ENCODE measurements at regions of chr2 and their contacts with region 1.

Region 1: DNA sequence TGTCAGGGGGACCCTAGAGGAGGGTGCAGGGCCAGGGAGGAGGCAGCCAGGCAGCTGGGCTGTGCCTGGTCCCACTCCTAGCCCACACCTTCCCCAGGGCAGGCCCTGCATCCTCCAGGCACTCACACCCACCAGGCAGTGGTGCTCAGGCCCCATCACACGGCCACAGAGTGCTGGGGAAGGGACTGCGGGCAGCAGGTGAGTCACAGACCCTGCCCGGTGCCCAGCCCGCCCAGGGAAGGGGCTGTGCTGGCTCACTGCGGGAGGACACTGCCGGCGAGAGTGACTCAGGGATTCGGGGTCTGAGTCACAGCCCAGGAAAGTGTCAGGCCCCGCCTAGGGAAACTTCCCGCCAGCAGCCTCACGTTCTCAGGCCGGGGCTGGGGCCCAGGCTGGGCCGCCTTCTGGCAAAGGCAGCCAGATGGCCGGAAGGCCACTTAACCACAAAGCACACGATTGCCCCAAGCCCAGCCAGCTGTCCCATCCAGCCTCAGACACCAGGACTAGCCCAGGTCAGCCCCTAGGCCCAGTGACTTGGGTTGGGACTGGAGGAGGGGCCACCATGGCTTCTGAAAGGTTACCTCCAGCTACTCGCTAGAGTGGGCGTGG is 42.2 kb downstream of the BIN1 start:
- DNase-seq: peak; percentile 60 to 73
- H3K4me3 ChIP-seq: no peak overlapping the region
- H3K4me3 Mint-ChIP-seq: no peak overlapping the region
- H3K27ac Mint-ChIP-seq: peak overlapping the region; percentile 19
- H3K4me1 ChIP-seq: peaks cover 24% of the 10 kb centered on the region
- H3K4me1 Mint-ChIP-seq: peaks cover 6% of the 10 kb centered on the region
- H3K27me3 ChIP-seq: no peaks in the 10 kb centered on the region
- H3K27me3 Mint-ChIP-seq: no peaks in the 10 kb centered on the region
- CTCF ChIP-seq: no peak

Region 2: GRCh38 chr2:126971481-126972278 is 93.1 kb before region 1 on chr2:
- CTCF ChIA-PET with region 1: no interaction called
- POLR2A ChIA-PET with region 1: no interaction called
- intact Hi-C with region 1: no loop called
- DNase-seq: peak; percentile 72 to 81
- H3K4me3 ChIP-seq: no peak overlapping the region
- H3K4me3 Mint-ChIP-seq: peak overlapping the region; percentile 33
- H3K27ac Mint-ChIP-seq: no peak overlapping the region
- H3K4me1 ChIP-seq: peaks cover 3% of the 10 kb centered on the region; the same call in 1 of the 2 replicates
- H3K4me1 Mint-ChIP-seq: peaks cover 11% of the 10 kb centered on the region
- H3K27me3 ChIP-seq: no peaks in the 10 kb centered on the region
- H3K27me3 Mint-ChIP-seq: peaks cover 7% of the 10 kb centered on the region
- CTCF ChIP-seq: peak; percentile 84 to 96

Region 3: GRCh38 chr2:127034883-127035611 is 29.7 kb before region 1 on chr2:
- CTCF ChIA-PET with region 1: no interaction called
- POLR2A ChIA-PET with region 1: no interaction called
- intact Hi-C with region 1: no loop called
- DNase-seq: peak in 1 of 2 experiments; percentile 57
- H3K4me3 ChIP-seq: no peak overlapping the region
- H3K4me3 Mint-ChIP-seq: no peak overlapping the region
- H3K27ac Mint-ChIP-seq: no peak overlapping the region
- H3K4me1 ChIP-seq: peaks cover 9% of the 10 kb centered on the region
- H3K4me1 Mint-ChIP-seq: no peaks in the 10 kb centered on the region
- H3K27me3 ChIP-seq: no peaks in the 10 kb centered on the region
- H3K27me3 Mint-ChIP-seq: no peaks in the 10 kb centered on the region
- CTCF ChIP-seq: peak in 1 of 2 experiments; percentile 2

Region 4: DNA sequence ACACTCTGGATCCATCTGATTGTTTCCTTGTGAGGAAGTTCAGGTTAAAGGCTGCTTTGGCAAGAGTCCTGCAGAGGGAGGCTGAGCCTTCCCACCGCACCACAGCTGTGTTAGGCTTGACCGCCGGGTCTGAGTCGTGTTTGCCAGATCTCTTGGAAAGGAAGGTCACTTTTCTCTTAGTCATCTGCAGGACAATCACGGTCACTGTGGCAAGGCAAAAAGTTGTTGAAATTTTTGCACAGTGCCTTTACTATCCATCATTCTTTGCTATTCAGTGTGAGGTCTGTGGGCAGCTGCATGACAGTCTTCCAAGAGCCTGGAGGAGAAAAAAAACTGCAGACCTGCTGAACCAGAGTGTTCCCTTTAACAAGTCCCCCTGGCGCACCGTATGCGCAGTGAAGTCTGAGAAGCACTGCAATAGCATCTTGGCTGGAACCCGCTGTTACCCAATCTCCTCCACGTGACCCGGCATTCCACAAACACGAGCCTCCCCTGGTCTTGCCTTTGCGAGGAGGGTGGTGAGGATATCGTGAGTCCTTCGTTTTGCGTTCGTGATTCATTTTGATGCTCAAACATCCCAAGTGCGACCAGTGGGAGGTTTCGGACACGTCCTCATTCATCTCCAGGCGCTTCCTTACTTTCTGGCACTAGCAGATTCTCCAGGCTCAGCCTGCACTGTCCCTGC is 19.2 kb after region 1 on chr2:
- CTCF ChIA-PET with region 1: interaction called, 9 read pairs
- POLR2A ChIA-PET with region 1: no interaction called
- intact Hi-C with region 1: loop called (anchors 2 kb)
- DNase-seq: no peak
- H3K4me3 ChIP-seq: no peak overlapping the region
- H3K4me3 Mint-ChIP-seq: no peak overlapping the region
- H3K27ac Mint-ChIP-seq: peak overlapping the region; percentile 93
- H3K4me1 ChIP-seq: peaks cover 83% of the 10 kb centered on the region
- H3K4me1 Mint-ChIP-seq: peaks cover 43% of the 10 kb centered on the region
- H3K27me3 ChIP-seq: no peaks in the 10 kb centered on the region
- H3K27me3 Mint-ChIP-seq: no peaks in the 10 kb centered on the region
- CTCF ChIP-seq: no peak

Region 5: GRCh38 chr2:127100251-127101047 is 35.7 kb after region 1 on chr2:
- CTCF ChIA-PET with region 1: interaction called, 9 read pairs
- POLR2A ChIA-PET with region 1: no interaction called
- intact Hi-C with region 1: loop called (anchors 1 kb)
- DNase-seq: peak; percentile 89 to 91
- H3K4me3 ChIP-seq: no peak overlapping the region
- H3K4me3 Mint-ChIP-seq: peak overlapping the region; percentile 68
- H3K27ac Mint-ChIP-seq: peak overlapping the region; percentile 94
- H3K4me1 ChIP-seq: peaks cover 85% of the 10 kb centered on the region
- H3K4me1 Mint-ChIP-seq: peaks cover 67% of the 10 kb centered on the region
- H3K27me3 ChIP-seq: no peaks in the 10 kb centered on the region
- H3K27me3 Mint-ChIP-seq: no peaks in the 10 kb centered on the region
- CTCF ChIP-seq: peak in 1 of 2 experiments; percentile 7

Region 6: DNA sequence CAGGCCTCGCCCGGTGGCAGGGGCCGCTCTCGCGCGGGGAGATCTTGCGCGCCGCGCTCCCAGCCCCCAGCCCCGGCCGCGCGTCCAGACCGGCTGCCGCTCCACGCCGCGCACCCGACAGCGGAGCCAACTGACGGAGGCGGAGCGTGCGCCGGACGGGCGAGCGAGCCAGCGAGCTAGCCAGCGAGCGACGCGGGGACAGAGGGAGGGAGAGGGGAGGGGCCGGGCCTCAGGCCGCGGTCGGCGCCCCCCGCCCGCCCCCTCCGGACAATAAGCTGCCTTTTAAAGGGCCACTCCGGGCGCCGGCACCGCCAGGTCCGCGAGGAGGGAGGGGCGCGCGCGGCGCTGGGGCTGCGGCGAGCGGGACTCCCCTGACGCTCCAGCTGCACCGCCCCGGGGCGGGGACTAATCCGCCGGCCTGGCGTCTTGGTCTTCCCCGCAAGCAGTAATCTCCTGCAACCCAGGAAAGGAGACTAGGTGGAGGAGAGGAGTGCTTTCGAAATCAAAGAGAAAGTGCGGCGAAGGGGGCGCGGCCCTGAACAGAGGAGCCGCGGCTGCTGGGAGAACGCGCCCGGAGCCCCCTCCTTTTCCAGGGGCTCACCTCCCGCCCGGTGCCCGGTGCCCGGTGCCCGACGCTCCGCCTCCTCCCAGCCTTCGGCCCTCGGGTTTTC is 42.3 kb after region 1 on chr2 and contains the start of gene BIN1:
- CTCF ChIA-PET with region 1: interaction called, 11 read pairs
- POLR2A ChIA-PET with region 1: no interaction called
- intact Hi-C with region 1: loop called (anchors 1 kb)
- DNase-seq: peak; percentile 97 to 98
- H3K4me3 ChIP-seq: peak within 1 kb of the TSS; percentile 98
- H3K4me3 Mint-ChIP-seq: peak within 1 kb of the TSS; percentile 85
- H3K27ac Mint-ChIP-seq: peak within 1 kb of the TSS; percentile 84
- H3K4me1 ChIP-seq: peaks cover 47% of the 10 kb centered on the region
- H3K4me1 Mint-ChIP-seq: peaks cover 39% of the 10 kb centered on the region
- H3K27me3 ChIP-seq: no peaks in the 10 kb centered on the region
- H3K27me3 Mint-ChIP-seq: no peaks in the 10 kb centered on the region
- CTCF ChIP-seq: no peak
- total RNA-seq, gene BIN1: 198 and 205 TPM in 2 replicates

Region 7: GRCh38 chr2:127143841-127144782 is 79.4 kb after region 1 on chr2:
- CTCF ChIA-PET with region 1: interaction called, 6 read pairs
- POLR2A ChIA-PET with region 1: no interaction called
- intact Hi-C with region 1: loop called (anchors 1 kb)
- DNase-seq: no peak
- H3K4me3 ChIP-seq: no peak overlapping the region
- H3K4me3 Mint-ChIP-seq: no peak overlapping the region
- H3K27ac Mint-ChIP-seq: no peak overlapping the region
- H3K4me1 ChIP-seq: no peaks in the 10 kb centered on the region
- H3K4me1 Mint-ChIP-seq: peaks cover 16% of the 10 kb centered on the region
- H3K27me3 ChIP-seq: no peaks in the 10 kb centered on the region
- H3K27me3 Mint-ChIP-seq: no peaks in the 10 kb centered on the region
- CTCF ChIP-seq: no peak

Region 8: DNA sequence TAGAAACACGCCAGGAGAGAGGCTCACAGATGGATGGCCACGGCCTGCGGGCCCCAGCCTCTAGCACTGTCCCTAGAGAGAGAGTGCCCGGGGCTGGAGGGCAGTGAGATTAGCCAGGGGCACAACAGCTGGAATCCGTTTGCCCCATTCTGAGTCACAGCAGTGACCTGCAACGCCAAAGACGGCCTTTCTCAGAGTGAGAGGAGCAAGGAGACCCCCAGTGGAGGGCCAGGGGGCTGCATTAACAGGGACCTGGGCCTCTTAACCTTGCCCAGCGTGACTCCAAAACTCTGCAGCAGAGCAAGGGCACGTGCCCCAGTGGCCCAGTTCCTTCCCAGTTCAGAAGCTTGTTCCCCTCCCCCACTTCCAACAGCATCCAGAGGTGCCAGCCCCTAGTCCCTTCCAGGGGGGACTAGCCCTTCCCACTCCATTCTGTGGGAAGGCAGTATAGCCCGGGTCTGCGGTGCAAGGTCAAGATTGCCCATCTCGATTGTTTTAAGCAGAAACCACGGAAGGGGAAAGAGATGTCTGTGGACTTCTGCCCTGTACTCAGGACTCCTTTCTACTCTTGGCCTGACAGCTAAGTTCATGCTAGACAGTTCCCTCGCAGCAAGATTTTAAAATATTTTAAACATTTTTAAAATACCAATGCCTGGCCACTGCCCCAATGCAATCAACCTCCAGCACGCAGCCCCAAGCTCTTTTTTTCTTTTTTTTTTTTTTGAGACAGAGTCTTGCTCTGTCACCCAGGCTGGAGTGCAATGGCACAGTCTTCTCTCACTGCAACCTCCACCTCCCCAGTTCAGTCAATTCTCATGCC is 93.1 kb after region 1 on chr2:
- CTCF ChIA-PET with region 1: interaction called, 6 read pairs
- POLR2A ChIA-PET with region 1: no interaction called
- intact Hi-C with region 1: loop called (anchors 5 kb)
- DNase-seq: peak in 1 of 2 experiments; percentile 60
- H3K4me3 ChIP-seq: no peak overlapping the region
- H3K4me3 Mint-ChIP-seq: no peak overlapping the region
- H3K27ac Mint-ChIP-seq: peak overlapping the region; percentile 70
- H3K4me1 ChIP-seq: peaks cover 38% of the 10 kb centered on the region
- H3K4me1 Mint-ChIP-seq: peaks cover 30% of the 10 kb centered on the region
- H3K27me3 ChIP-seq: no peaks in the 10 kb centered on the region
- H3K27me3 Mint-ChIP-seq: no peaks in the 10 kb centered on the region
- CTCF ChIP-seq: peak; percentile 41 to 44

Region 9: DNA sequence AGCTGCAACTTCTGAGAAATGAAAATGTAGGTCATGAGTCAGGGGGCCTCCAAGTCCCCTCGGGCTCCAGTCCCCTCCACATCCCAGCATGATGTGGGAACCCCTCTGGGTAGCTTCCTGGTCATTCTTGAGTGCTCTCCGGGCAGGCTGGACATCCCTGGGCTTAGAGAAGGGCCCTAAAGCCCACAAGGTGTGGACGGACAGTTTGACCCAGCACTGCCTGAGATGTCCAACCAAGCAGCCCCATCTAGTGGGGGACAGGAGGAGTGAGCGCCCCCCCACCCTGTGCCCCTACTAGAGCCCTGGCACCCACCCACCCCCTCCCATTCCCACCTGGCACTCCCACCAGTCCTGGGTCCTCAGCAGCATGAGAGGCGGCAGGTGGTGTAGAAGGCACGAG is 109.4 kb after region 1 on chr2:
- CTCF ChIA-PET with region 1: interaction called, 12 read pairs
- POLR2A ChIA-PET with region 1: no interaction called
- intact Hi-C with region 1: loop called (anchors 1 kb)
- DNase-seq: peak; percentile 64 to 68
- H3K4me3 ChIP-seq: no peak overlapping the region
- H3K4me3 Mint-ChIP-seq: no peak overlapping the region
- H3K27ac Mint-ChIP-seq: no peak overlapping the region
- H3K4me1 ChIP-seq: peaks cover 20% of the 10 kb centered on the region
- H3K4me1 Mint-ChIP-seq: peaks cover 25% of the 10 kb centered on the region
- H3K27me3 ChIP-seq: no peaks in the 10 kb centered on the region
- H3K27me3 Mint-ChIP-seq: no peaks in the 10 kb centered on the region
- CTCF ChIP-seq: peak; percentile 60 to 64